Cardiac septum (tissue), 1 donor: ENCODE measurements at regions of chr15 and their contacts with region 1.

Region 1: GRCh38 chr15:63157118-63157843 is at the start of gene RPS27L:
- DNase-seq: peak; percentile 97
- total RNA-seq, gene RPS27L: 104 TPM

Region 2: DNA sequence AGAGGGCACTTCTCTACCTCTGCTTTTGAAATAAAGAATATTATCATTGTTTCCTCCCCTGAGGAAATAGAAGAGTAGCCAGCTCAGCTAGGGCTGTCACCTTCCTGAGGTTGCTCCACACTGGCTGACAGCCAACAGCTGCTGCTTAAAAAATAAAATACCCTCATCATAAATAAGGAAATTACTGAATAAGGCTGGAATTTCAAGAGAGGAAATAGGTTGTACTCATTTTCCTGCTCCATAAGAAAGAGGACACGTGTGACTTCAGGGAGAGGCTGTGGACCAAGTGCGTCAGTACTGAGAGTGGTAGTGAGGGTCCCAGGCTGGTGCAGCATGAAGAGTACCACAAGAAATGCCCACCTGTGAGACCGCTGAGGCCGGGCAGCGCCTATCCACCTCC is 984.1 kb before region 1 on chr15:
- intact Hi-C with region 1: no loop called
- DNase-seq: no peak

Region 3: DNA sequence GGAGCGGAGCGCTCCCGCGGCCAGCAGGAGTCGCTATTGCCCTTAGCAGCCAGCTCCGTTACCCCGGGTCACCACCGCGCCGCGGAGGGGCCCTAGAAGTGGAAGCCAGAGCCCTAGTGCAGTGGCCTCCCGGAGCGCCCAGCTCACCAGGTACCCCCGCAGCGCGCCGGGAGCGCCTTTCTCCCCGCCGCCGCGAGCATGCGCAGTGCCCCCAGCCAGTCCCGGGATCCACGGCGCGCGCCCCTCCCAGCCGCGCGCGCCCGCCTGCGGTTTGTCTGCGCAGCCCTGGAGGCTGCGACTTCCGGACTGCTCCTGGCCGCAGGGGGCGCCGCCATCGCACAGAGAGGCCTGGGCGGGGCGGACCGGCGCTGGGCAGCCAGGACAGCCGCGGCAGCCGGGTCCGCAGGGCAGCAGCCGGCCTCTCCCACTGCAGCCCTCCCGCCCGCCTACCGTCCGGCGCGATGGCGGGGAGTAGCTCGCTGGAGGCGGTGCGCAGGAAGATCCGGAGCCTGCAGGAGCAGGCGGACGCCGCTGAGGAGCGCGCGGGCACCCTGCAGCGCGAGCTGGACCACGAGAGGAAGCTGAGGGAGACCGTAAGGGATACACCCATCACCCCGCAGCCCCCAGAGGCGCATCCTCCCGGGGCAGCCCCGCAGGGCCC is 109.0 kb before region 1 on chr15:
- intact Hi-C with region 1: loop called (anchors 10 kb)
- DNase-seq: peak; percentile 96